HepG2 (cell line): ENCODE measurements at regions of chr5 and their contacts with region 1.

Region 1: DNA sequence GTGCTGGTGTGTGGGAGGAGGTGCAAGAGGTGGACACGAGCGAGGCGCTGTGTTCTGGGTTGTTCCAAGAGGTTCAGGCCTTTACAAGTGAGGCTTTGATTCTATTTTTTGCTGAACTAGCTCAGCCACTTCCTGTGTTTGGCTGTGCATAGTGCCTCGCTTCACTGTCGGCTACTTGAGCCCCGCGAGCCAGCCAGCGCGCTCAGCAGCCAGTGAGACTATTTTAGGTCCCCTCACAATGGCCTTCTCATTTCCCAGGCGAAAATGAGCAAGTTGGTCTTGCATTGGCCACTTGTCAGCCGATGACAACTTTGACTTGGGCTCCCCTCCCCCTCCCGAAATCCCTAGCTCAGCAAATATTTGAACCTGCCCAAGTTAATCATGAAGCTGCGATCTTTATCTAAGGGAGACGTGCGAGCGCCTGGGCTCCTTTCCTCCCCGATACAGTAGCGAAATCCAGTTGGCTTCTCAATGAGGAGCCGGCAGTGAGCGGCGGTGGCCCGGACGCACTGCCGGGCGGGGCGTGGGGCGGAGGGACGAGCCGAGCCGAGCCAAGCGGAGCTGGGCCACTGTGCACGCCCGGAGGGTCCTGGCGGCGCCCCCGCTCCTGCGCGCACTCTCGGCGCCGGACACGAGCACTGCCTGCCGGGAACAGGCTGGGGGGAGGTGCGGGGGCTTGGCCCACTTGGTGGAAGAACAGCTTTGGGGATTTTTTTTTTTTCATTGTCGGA is 72.6 kb downstream of the PIK3R1 start:
- DNase-seq: peak; percentile 88
- ATAC-seq: peak; percentile 96
- H3K4me3 ChIP-seq: peak overlapping the region; percentile 62 to 76 (median 65)
- H3K27ac ChIP-seq: peak overlapping the region; percentile 71
- H3K4me1 ChIP-seq: peaks cover 68% of the 10 kb centered on the region
- H3K27me3 ChIP-seq: no peaks in the 10 kb centered on the region; a peak in 1 of 5 replicates
- CTCF ChIP-seq: no peak; the same call in 1 of the 2 replicates
- EP300 ChIP-seq: peak in 1 of 2 experiments; percentile 46; a peak in 1 of 4 replicates
- POLR2A ChIP-seq: peak in 1 of 2 experiments; percentile 52; a peak in 2 of 4 replicates
- RAD21 ChIP-seq: no peak

Region 2: GRCh38 chr5:68271124-68271523 is 17.0 kb before region 1 on chr5:
- CTCF ChIA-PET with region 1: no interaction called
- POLR2A ChIA-PET with region 1: no interaction called
- in situ Hi-C with region 1: no loop called
- intact Hi-C with region 1: loop called (anchors 2 kb)
- DNase-seq: peak; percentile 61
- ATAC-seq: peak; percentile 98
- H3K4me3 ChIP-seq: no peak overlapping the region
- H3K27ac ChIP-seq: peak overlapping the region; percentile 53
- H3K4me1 ChIP-seq: peaks cover 58% of the 10 kb centered on the region
- H3K27me3 ChIP-seq: no peaks in the 10 kb centered on the region
- CTCF ChIP-seq: peak; percentile 23
- EP300 ChIP-seq: peak in 1 of 2 experiments; percentile 82; a peak in 1 of 4 replicates
- POLR2A ChIP-seq: no peak
- RAD21 ChIP-seq: no peak

Region 3: GRCh38 chr5:68304421-68305052 is 16.4 kb after region 1 on chr5:
- CTCF ChIA-PET with region 1: no interaction called
- POLR2A ChIA-PET with region 1: no interaction called
- in situ Hi-C with region 1: no loop called
- intact Hi-C with region 1: no loop called
- DNase-seq: no peak
- ATAC-seq: no peak
- H3K4me3 ChIP-seq: no peak overlapping the region
- H3K27ac ChIP-seq: no peak overlapping the region
- H3K4me1 ChIP-seq: no peaks in the 10 kb centered on the region
- H3K27me3 ChIP-seq: peaks cover 0 to 4% of the 10 kb centered on the region in 2 experiments; a peak in 1 of 5 replicates
- CTCF ChIP-seq: no peak
- EP300 ChIP-seq: no peak
- POLR2A ChIP-seq: no peak
- RAD21 ChIP-seq: no peak

Region 4: DNA sequence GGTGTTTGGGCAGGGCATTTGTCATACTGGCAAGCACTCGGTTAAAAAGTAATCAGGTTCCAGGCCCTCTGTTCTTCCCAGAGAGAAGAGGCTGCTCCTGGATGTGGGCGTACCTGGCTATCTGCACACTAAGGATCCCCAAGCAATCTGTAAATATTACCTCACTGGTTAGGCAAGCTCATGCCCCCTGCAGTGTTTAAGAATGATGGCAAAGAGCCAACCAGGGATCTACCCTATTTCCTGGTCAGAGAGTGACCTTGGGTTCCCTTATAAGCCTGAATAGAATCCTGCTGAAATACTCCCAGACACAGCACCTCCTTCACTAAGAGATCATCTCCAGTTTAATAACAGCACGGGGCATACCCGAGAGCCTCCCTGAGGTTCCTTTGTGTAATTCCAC is 108.6 kb after region 1 on chr5:
- CTCF ChIA-PET with region 1: no interaction called
- POLR2A ChIA-PET with region 1: no interaction called
- in situ Hi-C with region 1: no loop called
- intact Hi-C with region 1: loop called (anchors 1 kb)
- DNase-seq: peak; percentile 93
- ATAC-seq: peak; percentile 91
- H3K4me3 ChIP-seq: peak overlapping the region; percentile 9 to 34 (median 13); a peak in 3 of 6 replicates
- H3K27ac ChIP-seq: peak overlapping the region; percentile 58
- H3K4me1 ChIP-seq: peaks cover 39% of the 10 kb centered on the region
- H3K27me3 ChIP-seq: no peaks in the 10 kb centered on the region
- CTCF ChIP-seq: no peak
- EP300 ChIP-seq: peak in 1 of 2 experiments; percentile 69; a peak in 2 of 4 replicates
- POLR2A ChIP-seq: no peak
- RAD21 ChIP-seq: no peak

Region 5: DNA sequence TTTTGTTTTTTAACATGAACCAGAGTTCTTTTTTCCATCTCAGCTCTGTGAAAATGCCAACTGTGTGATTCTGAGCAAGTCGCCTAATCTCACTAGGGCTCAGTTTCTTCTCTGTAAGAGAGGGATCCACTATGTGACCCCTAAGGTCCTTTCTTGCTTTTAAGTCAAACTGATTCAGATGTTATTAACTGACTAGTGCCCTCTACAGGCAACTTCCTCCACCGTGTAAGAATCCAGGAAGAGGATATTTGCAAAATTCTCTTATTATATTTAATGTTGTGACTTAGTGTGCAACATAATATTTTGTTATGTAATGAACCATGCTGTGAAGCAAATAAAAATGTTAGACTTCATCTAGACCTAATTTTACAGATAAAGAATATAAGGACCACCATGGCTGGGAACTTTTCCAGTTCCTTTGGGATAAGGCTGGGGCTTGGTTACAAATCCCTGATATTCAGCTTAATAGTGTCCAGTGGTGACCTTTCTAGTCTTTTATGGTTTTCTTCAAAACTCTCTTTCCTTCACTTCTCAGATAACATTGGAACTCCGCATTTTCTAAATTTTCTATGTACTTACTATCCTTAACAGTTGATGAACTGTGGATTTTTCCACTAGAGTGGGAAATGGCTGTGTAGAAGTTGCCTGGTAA is 172.1 kb after region 1 on chr5:
- CTCF ChIA-PET with region 1: interaction called, 13 read pairs
- POLR2A ChIA-PET with region 1: no interaction called
- in situ Hi-C with region 1: loop called (anchors 5 kb)
- intact Hi-C with region 1: loop called (anchors 1 kb)
- DNase-seq: peak; percentile 52
- ATAC-seq: peak; percentile 60
- H3K4me3 ChIP-seq: no peak overlapping the region
- H3K27ac ChIP-seq: no peak overlapping the region
- H3K4me1 ChIP-seq: peaks cover 41% of the 10 kb centered on the region
- H3K27me3 ChIP-seq: peaks cover 0 to 7% of the 10 kb centered on the region in 2 experiments; a peak in 1 of 5 replicates
- CTCF ChIP-seq: peak; percentile 58
- EP300 ChIP-seq: no peak
- POLR2A ChIP-seq: no peak
- RAD21 ChIP-seq: 0 out of 2 replicates have a peak, but pooled peaks have one; percentile 15

Region 6: DNA sequence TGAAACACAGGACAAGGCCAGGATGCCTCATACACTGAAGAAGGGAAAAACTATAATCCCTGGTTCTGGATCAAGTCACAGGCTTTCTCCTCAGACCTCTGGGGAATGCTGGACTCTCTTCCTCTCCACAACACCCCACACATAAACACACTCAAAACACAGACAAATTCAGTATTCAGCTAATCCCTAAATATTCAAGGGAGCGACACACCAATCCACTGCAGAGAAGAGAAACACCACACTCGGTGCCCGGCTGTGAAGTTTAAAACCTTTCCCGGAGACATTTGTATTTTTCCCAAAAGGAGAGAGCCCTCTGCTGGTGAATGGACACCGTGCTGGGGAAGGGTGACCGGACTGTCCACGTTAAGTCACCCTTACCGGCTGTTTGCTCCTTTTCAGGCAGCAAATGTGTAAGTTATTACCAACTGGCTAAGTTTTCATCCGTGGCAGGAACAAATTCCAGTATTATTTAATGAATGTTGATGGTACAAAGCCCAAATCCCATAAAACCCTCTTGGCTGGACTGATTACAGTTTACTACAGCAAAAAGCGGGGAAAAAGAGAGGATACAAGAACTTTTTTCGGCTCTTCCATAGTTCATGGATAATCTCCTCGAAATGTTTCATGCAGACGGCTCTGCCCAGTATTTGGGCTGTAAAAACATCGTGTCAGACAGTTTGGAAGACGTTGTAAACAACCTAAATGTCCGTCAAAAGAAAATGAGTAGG is 674.8 kb after region 1 on chr5:
- CTCF ChIA-PET with region 1: no interaction called
- POLR2A ChIA-PET with region 1: no interaction called
- in situ Hi-C with region 1: no loop called
- intact Hi-C with region 1: loop called (anchors 1 kb)
- DNase-seq: peak; percentile 46
- ATAC-seq: peak; percentile 96
- H3K4me3 ChIP-seq: no peak overlapping the region
- H3K27ac ChIP-seq: no peak overlapping the region
- H3K4me1 ChIP-seq: peaks cover 2% of the 10 kb centered on the region
- H3K27me3 ChIP-seq: peaks cover 0 to 4% of the 10 kb centered on the region in 2 experiments; a peak in 1 of 5 replicates
- CTCF ChIP-seq: peak; percentile 85
- EP300 ChIP-seq: no peak
- POLR2A ChIP-seq: no peak
- RAD21 ChIP-seq: peak; percentile 48; the same call in 1 of the 2 replicates